Dendritic cell treated with granulocyte-macrophage colony-stimulating factor and Interleukin-4, amounts not matched to agents 40 ng/mL and 50 ng/mL, for 4 days (primary cell): ENCODE measurements at regions of chr1 and their contacts with region 1.

Region 1: GRCh38 chr1:184386312-184387068 is at the start of gene C1orf21:
- H3K4me3 Mint-ChIP-seq: peak within 1 kb of the TSS; percentile 98
- H3K27ac Mint-ChIP-seq: peak within 1 kb of the TSS; percentile 74
- H3K4me1 Mint-ChIP-seq: peaks cover 29% of the 10 kb centered on the region
- H3K27me3 Mint-ChIP-seq: peaks cover 44% of the 10 kb centered on the region

Region 2: GRCh38 chr1:184483101-184483683 is 96.7 kb after region 1 on chr1:
- intact Hi-C with region 1: loop called (anchors 10 kb)
- H3K4me3 Mint-ChIP-seq: no peak overlapping the region
- H3K27ac Mint-ChIP-seq: peak overlapping the region; percentile 75
- H3K4me1 Mint-ChIP-seq: peaks cover 25% of the 10 kb centered on the region
- H3K27me3 Mint-ChIP-seq: no peaks in the 10 kb centered on the region